Activated T-helper 1 cell treated with anti-CD3 and anti-CD28 coated beads, Interleukin-12 subunit alpha, Interleukin-12 subunit beta, Interleukin-2, Interleukin-4 antibody, amounts not matched to agents 30 ng/mL and 10 ng/mL and 1 ng/mL, durations not matched to agents 14 hours and 24 hours and 36 hours (primary cell): ENCODE measurements at regions of chr17 and their contacts with region 1.

Region 1: DNA sequence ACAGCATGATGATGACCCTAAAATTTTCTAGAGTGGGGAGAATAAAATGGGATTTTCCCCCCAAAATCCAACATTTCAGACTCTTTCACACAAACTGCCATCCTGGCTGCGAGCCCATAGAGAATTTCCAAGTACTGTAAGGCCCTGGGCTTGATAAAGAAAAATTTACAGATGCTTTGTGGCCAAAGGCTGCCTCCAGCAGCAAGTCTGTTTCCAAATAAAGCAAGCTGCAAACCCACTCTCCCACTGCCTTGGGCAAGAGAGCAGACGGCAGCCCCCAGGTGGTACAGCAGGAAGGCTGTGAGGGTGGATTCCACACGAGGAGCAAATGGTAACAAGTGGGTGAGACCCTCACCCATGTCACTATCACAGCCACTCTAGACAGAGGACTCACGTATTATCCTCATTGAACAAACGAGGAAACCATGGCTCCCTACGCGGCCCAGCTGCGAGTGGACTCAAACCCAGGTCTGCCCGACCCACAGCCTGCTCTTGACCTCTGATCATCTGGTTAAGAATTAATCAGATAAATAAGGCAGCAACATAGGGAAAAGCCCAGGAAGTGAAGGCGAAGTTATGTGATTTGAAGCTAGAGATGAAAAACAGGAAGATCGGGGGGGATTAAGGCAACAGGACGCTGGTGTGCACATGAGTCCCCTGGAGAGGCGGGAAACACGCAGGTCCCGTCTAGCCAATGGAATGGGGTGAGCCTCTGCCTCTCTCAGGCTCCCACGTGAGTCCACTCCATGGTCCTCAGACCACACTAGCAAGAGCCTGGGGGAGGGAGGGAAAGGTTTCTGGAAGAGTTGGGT is 37.4 kb downstream of the AXIN2 start:
- DNase-seq: no peak
- H3K4me3 Mint-ChIP-seq: peak overlapping the region; percentile 67
- H3K27ac Mint-ChIP-seq: peak overlapping the region; percentile 70
- H3K4me1 Mint-ChIP-seq: peaks cover 33% of the 10 kb centered on the region
- H3K27me3 Mint-ChIP-seq: peaks cover 42% of the 10 kb centered on the region

Region 2: DNA sequence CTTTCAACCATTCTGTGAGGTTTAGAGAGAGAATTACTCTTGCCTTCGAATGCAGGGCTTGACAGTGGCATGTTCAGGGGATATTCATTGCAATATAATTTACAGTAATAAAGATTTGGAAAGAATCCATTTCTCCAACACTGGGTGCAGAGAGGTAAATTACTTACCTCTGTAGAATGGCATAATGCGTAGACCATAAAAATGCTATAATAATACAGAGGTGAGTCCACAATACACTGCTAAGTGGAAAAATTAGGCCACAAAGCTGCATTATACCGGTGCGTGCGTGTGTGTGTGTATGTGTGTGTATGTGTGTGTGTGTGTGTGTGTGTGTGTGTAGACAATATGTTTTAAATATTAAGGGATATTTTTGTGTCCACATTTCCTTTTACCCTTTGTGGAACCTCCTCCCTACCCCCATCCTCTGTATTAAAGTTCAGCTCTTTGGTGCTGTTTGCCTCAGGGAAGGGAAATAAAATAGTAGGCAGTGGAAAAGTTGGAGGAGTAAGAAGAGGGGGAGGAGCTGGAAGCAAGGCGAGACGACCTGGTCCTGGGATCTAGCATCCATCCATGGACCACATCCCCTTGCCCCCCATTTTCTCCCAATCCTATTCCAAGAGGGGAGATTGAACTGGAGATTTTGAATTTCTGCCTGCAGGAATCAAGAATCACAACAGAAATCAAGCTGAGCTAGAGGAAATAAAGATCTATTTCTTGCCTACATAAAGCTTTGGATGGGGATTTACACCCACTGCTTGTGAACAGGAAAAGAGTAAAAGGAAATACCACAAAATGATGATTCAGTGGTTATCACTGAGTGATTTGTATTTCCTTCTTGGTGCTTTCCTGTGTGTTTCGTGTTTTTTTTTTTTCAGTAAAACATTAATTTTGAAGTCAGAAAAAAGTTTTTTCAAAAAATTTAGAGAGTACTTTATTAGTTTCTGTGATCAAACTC is 262.1 kb before region 1 on chr17:
- intact Hi-C with region 1: loop called (anchors 10 kb)
- DNase-seq: no peak
- H3K4me3 Mint-ChIP-seq: no peak overlapping the region
- H3K27ac Mint-ChIP-seq: no peak overlapping the region
- H3K4me1 Mint-ChIP-seq: peaks cover 38% of the 10 kb centered on the region
- H3K27me3 Mint-ChIP-seq: peaks cover 13% of the 10 kb centered on the region

Region 3: GRCh38 chr17:65799869-65800268 is 275.8 kb after region 1 on chr17:
- intact Hi-C with region 1: loop called (anchors 1 kb)
- DNase-seq: no peak
- H3K4me3 Mint-ChIP-seq: no peak overlapping the region
- H3K27ac Mint-ChIP-seq: peak overlapping the region; percentile 54
- H3K4me1 Mint-ChIP-seq: peaks cover 12% of the 10 kb centered on the region
- H3K27me3 Mint-ChIP-seq: no peaks in the 10 kb centered on the region